ENCODE measurements at regions of chr2 and their contacts with region 1.

Region 1: GRCh38 chr2:171703574-171704347 is 16.5 kb downstream of the DYNC1I2 start:
- DNase-seq: peak; percentile 53
- ATAC-seq: peak; percentile 69
- H3K4me3 ChIP-seq: no peak overlapping the region
- H3K27ac ChIP-seq: no peak overlapping the region
- H3K4me1 ChIP-seq: peaks cover 8% of the 10 kb centered on the region; the same call in 1 of the 2 replicates
- H3K27me3 ChIP-seq: no peaks in the 10 kb centered on the region
- CTCF ChIP-seq: peak; percentile 73
- EP300 ChIP-seq: no peak
- POLR2A ChIP-seq: no peak
- RAD21 ChIP-seq: peak; percentile 73

Region 2: DNA sequence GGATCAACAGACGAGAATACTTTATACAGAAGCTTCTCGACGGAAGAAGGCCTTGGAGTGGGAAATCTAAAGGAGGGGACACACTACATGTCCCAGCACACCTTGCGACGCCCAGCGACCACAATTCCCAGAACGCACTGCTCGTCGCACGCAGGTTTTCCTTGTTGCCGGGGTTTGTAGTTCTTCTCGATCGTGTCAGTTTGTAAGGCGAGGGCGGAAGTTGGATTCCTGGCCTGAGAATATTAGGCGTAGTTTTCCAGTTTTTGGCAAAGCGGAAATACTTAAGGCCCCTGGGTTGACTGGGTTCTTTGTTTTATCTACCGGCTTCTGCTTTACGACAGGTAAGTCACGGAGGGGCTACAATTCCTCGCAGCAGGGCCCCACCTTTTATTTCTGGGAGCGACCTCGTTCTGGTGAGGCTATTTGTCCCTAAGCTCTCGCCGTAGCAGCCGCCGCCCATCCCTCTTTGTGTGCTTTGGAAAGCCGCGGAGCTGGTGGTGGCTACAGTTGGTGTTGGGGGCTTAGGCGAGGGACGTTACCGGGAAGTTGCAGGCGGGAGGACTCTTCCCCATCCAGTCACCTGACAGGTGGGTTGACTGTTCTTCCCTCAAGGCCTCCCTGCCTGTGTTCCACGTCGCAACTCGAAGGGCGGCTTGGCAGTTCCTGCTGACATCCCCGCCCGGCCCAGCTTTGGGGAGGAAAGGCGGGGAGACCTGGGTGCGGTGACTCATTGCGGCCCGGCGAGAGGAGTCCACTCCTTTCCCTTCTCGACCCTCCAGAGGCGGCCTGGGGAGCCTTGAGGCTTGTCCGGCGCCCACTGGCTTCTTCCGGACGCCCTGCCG is 16.3 kb before region 1 on chr2 and contains the start of gene DYNC1I2:
- CTCF ChIA-PET with region 1: interaction called, 3 read pairs
- POLR2A ChIA-PET with region 1: interaction called, 20 read pairs
- in situ Hi-C with region 1: no loop called
- intact Hi-C with region 1: no loop called
- DNase-seq: peak; percentile 95
- ATAC-seq: peak; percentile 99
- H3K4me3 ChIP-seq: peak within 1 kb of the TSS; percentile 86 to 99 (median 95)
- H3K27ac ChIP-seq: peak within 1 kb of the TSS; percentile 70
- H3K4me1 ChIP-seq: peaks cover 12% of the 10 kb centered on the region
- H3K27me3 ChIP-seq: peaks cover 0 to 10% of the 10 kb centered on the region in 2 experiments; a peak in 1 of 5 replicates
- CTCF ChIP-seq: peak; percentile 18; the same call in 1 of the 2 replicates
- EP300 ChIP-seq: peak in 1 of 2 experiments; percentile 13; a peak in 1 of 4 replicates
- POLR2A ChIP-seq: peak; percentile 72 to 82
- RAD21 ChIP-seq: no peak; the same call in 1 of the 2 replicates
- total RNA-seq, gene DYNC1I2: 84.0 and 125 TPM in 2 replicates

Region 3: GRCh38 chr2:171893824-171894611 is 190.3 kb after region 1 on chr2 and contains the start of gene SLC25A12:
- CTCF ChIA-PET with region 1: no interaction called
- POLR2A ChIA-PET with region 1: no interaction called
- in situ Hi-C with region 1: no loop called
- intact Hi-C with region 1: loop called (anchors 2 kb)
- DNase-seq: peak; percentile 71
- ATAC-seq: peak; percentile 95
- H3K4me3 ChIP-seq: peak within 1 kb of the TSS; percentile 84 to 89 (median 88)
- H3K27ac ChIP-seq: peak within 1 kb of the TSS; percentile 1
- H3K4me1 ChIP-seq: peaks cover 36% of the 10 kb centered on the region
- H3K27me3 ChIP-seq: no peaks in the 10 kb centered on the region; a peak in 1 of 5 replicates
- CTCF ChIP-seq: no peak
- EP300 ChIP-seq: no peak
- POLR2A ChIP-seq: peak; percentile 59 to 66; a peak in 3 of 4 replicates
- RAD21 ChIP-seq: peak; percentile 61
- total RNA-seq, gene SLC25A12: 8.1 and 13.4 TPM in 2 replicates

Region 4: DNA sequence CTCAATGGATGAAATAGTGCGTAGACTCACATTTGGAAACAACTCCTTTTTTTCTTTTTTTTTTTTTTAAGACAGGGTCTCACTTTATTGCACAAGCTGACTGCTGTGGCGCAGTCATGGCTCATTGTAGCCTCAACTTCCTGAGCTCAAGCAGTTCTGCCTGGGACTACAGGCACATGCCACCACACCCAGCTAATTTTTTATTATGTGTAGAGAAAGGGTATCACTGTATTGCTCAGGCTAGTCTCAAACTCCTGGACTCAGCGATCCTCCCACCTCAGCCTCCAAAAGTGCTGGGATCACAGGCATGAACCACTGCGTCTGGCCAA is 235.9 kb after region 1 on chr2:
- CTCF ChIA-PET with region 1: no interaction called
- POLR2A ChIA-PET with region 1: no interaction called
- in situ Hi-C with region 1: loop called (anchors 5 kb)
- intact Hi-C with region 1: loop called (anchors 5 kb)
- DNase-seq: no peak
- ATAC-seq: no peak
- H3K4me3 ChIP-seq: no peak overlapping the region
- H3K27ac ChIP-seq: no peak overlapping the region
- H3K4me1 ChIP-seq: peaks cover 10% of the 10 kb centered on the region
- H3K27me3 ChIP-seq: no peaks in the 10 kb centered on the region
- CTCF ChIP-seq: no peak
- EP300 ChIP-seq: no peak
- POLR2A ChIP-seq: no peak
- RAD21 ChIP-seq: no peak

Measured in HepG2 (cell line).